ENCODE measurements at regions of chr6 and their contacts with region 1.

Region 1: DNA sequence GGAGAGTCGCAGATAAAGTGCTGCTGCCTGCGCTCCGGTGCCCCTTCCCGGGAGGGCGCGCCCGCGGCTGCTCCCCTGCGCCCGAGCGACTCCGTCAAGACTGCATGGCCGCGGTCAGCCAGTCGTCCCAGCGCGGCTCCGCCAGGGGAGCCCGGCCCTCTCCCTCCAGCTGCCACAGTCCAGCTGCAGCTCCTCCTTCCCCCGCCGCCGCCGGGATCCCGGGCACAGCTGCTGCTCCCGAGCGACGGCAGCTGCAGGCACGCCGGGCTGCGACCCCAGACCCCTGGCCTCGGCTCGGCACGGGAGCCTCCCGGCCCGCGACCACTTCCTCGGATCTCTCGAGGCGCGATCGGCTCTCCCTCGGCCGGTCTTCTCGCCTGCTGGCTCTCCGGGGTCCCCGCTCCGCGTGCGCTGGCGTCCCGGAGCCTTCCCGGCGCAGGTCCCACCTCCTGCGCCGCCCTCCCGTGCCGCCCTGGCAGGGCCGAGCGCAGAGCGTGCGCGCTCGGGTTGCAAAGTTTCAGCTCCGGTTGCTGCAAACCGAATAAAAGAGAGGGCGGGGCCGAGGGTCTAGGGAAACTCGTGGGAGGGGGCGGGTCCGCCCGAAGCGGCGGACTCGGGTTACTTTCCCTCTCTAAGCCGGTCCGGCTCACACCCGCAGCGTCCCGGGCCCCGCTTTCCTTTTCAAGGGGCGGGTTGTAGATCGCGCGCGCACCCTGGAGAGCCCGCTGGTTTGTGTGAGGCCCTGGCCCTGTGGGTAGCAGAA is at the start of gene CNKSR3:
- H3K4me3 ChIP-seq: peak within 1 kb of the TSS; percentile 90
- H3K27ac ChIP-seq: peak within 1 kb of the TSS; percentile 94
- H3K4me1 ChIP-seq: peaks cover 4% of the 10 kb centered on the region; the same call in 1 of the 2 replicates
- CTCF ChIP-seq: 0 out of 2 replicates have a peak, but pooled peaks have one; percentile 60

Region 2: DNA sequence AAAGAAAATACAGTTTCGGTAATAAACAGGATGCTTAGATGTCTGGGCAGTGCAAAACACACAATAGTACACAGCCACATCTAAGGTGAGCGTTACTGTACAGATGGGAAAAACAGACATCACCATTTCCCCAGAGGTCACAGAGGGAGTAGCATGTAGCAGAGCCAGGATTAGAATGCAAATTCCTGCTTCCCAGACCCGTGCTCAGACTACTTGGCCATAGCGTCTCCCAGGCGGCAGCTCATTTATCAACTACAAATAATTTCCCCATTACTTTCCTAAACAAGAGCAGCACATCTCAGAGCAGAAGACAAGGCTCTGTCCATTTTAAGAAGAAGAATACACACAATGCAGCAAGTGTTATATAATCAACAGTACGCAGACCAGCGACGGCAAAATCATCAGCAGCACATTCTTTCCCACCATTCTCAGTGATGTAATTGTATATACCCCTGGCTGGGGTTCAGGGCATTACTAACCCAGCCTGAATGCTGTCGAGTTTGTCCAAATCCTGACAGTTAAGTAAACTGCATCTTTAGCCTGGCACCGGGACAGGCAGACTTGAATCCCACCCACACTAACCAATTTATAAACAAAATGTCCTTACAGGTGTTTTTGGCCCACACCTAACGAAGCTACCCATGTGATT is 61.8 kb before region 1 on chr6:
- CTCF ChIA-PET with region 1: interaction called, 4 read pairs
- POLR2A ChIA-PET with region 1: interaction called, 12 read pairs
- H3K4me3 ChIP-seq: peak overlapping the region; percentile 9; the same call in 1 of the 2 replicates
- H3K27ac ChIP-seq: peak overlapping the region; percentile 11; the same call in 1 of the 2 replicates
- H3K4me1 ChIP-seq: peaks cover 17% of the 10 kb centered on the region
- CTCF ChIP-seq: peak; percentile 31; the same call in 1 of the 2 replicates

Region 3: GRCh38 chr6:154555073-154555677 is 44.9 kb after region 1 on chr6:
- CTCF ChIA-PET with region 1: interaction called, 4 read pairs
- POLR2A ChIA-PET with region 1: interaction called, 13 read pairs
- H3K4me3 ChIP-seq: no peak overlapping the region
- H3K27ac ChIP-seq: no peak overlapping the region
- H3K4me1 ChIP-seq: peaks cover 4% of the 10 kb centered on the region
- CTCF ChIP-seq: no peak

Region 4: GRCh38 chr6:154569156-154569862 is 59.0 kb after region 1 on chr6:
- CTCF ChIA-PET with region 1: no interaction called
- POLR2A ChIA-PET with region 1: no interaction called
- H3K4me3 ChIP-seq: no peak overlapping the region
- H3K27ac ChIP-seq: no peak overlapping the region
- H3K4me1 ChIP-seq: peaks cover 6% of the 10 kb centered on the region; the same call in 1 of the 2 replicates
- CTCF ChIP-seq: no peak